Left cardiac atrium (tissue), 4 donors: ENCODE measurements at regions of chrX and their contacts with region 1.

Region 1: GRCh38 chrX:1649621-1650020 is 34.8 kb downstream of the ASMT start:
- DNase-seq: no peak
- ATAC-seq: no peak

Region 2: GRCh38 chrX:2589186-2590030 is 939.8 kb after region 1 on chrX:
- intact Hi-C with region 1: loop called (anchors 1 to 5 kb)
- DNase-seq: no peak
- ATAC-seq: no peak

Region 3: GRCh38 chrX:2819345-2820135 is 1169.9 kb after region 1 on chrX:
- intact Hi-C with region 1: loop called in 1 of 2 experiments (anchors 10 kb)
- DNase-seq: no peak
- ATAC-seq: no peak